Activated CD8-positive, alpha-beta T cell treated with anti-CD3 and anti-CD28 coated beads for 36 hours (primary cell): ENCODE measurements at regions of chr14 and their contacts with region 1.

Region 1: DNA sequence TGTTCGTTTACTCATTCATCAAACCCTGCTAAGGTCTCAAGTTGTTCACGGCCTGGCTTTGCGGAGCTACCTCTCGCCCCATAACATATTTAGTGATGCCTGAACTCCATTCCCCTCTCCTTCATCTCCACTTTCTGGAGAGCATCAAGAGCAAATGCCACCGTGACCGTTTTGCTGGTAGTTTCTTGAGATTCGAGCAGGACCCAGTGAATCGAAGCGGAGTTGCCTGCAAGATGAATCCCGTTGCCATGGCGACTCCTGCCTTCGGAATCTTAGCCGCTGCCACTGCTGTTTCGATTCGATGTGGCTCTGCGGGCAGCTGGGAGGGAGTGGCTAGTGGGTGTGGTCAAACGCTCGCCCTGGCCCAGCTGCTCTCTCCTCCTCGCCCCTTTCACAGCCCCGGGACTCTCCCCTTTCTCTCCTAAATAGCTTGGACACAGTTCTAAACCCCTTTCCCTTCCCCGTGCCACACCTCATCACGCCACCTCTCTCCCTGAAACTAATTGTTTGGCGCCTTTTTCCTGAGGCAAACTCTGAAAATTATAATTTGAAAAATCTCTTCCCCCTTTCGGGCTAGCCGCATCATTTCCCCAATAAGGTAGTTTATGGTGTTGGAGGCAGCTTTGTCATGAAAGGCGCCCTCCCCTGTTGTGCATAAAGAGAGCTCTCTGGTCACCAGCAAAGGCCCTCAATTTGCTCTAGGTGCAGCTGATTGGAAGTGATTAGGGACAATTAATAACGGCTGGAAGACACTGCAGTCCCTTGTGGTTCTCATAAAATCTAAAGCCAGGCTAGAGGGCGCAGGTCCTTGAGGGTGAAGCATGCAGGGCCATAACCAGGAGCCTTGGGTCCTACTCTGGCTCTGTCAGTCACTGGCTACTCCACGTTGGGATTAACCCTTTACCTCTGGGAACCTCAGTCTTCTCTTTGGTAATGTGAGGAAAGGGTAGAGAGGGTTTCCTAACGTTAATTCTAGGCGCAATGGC is 1.6 kb downstream of the DAAM1 start:
- DNase-seq: peak; percentile 90
- ATAC-seq: peak; percentile 15
- H3K4me3 Mint-ChIP-seq: peak overlapping the region; percentile 87
- H3K27ac Mint-ChIP-seq: peak overlapping the region; percentile 71
- H3K4me1 Mint-ChIP-seq: peaks cover 10% of the 10 kb centered on the region
- H3K27me3 Mint-ChIP-seq: peaks cover 6% of the 10 kb centered on the region
- CTCF ChIP-seq: no peak

Region 2: DNA sequence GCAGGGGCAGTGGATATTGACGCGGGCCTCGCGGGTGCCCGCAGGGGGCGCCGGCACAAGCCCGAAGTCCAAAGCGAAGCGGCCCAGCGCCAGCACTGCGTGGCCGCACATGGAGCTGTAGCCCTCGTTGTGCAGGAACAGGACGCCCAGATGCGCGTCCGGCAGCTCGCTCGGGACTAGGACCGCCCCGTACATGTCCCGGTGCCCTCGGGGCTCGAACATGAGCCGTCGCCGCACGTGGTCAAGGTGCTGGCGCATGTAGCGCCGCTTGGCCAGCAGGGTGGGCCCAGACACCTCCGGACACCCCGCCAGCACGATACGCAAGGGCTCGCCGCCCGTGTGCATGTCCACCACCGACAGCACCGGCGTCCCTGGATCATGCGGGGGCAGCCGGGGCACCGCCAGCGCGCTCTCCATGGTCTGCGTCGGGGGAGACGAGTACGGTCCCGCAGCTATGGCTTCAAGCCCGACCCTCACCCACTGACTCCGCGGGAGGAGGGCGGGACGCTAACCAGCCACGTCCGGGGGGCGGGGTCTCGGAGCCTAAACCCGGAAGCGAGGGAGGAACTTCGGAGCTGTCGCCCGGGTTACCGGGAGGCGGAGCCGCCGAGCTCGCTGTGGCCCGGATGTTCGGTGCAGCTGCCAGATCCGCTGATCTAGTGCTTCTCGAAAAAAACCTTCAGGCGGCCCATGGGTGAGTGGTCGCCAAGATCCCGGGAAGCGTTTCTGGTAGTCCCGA is 294.0 kb after region 1 on chr14 and contains the starts of genes JKAMP and L3HYPDH:
- CTCF ChIA-PET with region 1: interaction called, 11 read pairs
- POLR2A ChIA-PET with region 1: interaction called, 3 read pairs
- intact Hi-C with region 1: no loop called
- DNase-seq: peak; percentile 98
- ATAC-seq: peak; percentile 96
- H3K4me3 Mint-ChIP-seq: peak within 1 kb of the TSS; percentile 88
- H3K27ac Mint-ChIP-seq: peak within 1 kb of the TSS; percentile 88
- H3K4me1 Mint-ChIP-seq: peaks cover 55% of the 10 kb centered on the region
- H3K27me3 Mint-ChIP-seq: no peaks in the 10 kb centered on the region
- CTCF ChIP-seq: peak; percentile 25
- total RNA-seq, gene JKAMP: 15.3 to 16.0 TPM
- total RNA-seq, gene L3HYPDH: 12.3 to 14.6 TPM

Region 3: GRCh38 chr14:59534361-59534987 is 344.4 kb after region 1 on chr14:
- CTCF ChIA-PET with region 1: no interaction called
- POLR2A ChIA-PET with region 1: no interaction called
- intact Hi-C with region 1: no loop called
- DNase-seq: no peak
- ATAC-seq: no peak
- H3K4me3 Mint-ChIP-seq: no peak overlapping the region
- H3K27ac Mint-ChIP-seq: no peak overlapping the region
- H3K4me1 Mint-ChIP-seq: no peaks in the 10 kb centered on the region
- H3K27me3 Mint-ChIP-seq: peaks cover 10% of the 10 kb centered on the region
- CTCF ChIP-seq: no peak